Sigmoid colon (tissue), 7 donors: ENCODE measurements at regions of chr7 and their contacts with region 1.

Region 1: GRCh38 chr7:38178004-38178694 is at the start of gene STARD3NL:
- DNase-seq: peak; percentile 99
- H3K4me3 ChIP-seq: peak within 1 kb of the TSS; percentile 62 to 85 (median 82)
- H3K27ac ChIP-seq: peak within 1 kb of the TSS; percentile 85 to 95 (median 94)
- H3K4me1 ChIP-seq: peaks cover 0 to 41% (median 25%) of the 10 kb centered on the region in 4 donors
- H3K27me3 ChIP-seq: no peaks in the 10 kb centered on the region
- CTCF ChIP-seq: peak; percentile 18 to 36 (median 20)
- EP300 ChIP-seq: no peak
- POLR2A ChIP-seq: peak in 1 of 2 donors; percentile 36
- total RNA-seq, gene STARD3NL: 28.2 to 67.6 (median 48.5) TPM

Region 2: DNA sequence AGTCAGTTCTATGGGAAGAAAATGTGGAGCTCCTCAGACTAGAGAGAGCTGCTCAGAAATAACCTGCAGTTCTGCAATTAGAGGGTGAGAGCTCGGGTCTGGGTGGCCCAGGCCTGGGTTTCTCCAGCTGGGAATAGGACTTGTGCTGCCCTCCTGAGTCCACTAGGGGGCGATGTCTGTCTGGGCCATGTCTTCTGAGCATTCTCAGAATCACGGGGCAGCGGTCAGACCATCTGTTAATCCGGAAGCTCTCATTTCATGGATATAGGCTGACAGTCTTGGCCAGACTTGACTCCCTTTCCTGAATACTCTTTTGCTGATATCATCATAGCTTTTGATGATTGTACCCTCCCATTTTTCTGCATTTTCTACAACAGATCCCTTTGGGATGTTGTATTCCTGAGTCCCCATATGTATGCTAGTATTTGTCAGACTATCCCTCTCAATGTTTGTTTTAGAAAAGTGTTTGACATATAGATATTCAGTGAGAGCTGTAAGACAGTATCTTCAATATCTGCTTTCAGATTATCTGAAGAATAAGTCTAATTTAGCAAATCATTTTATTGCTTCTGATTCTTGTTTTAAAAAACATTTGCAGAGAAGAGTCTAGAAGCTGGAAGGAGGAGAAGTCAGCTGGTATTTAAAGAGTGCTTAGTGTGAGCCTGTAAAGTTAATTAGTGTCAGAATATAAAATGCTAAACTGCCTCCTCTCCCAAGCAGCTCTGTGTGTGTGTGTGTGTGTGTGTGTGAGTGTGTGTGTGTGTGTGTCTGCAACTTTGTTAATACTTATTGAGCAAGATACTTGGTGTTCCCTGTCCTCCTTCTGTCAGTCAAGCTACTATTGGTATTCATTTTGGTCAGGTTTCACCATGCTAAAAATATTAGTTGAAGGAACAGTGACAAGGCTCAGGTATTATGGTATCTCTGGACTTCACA is 37.9 kb after region 1 on chr7:
- intact Hi-C with region 1: loop called (anchors 2 kb)
- DNase-seq: peak; percentile 89
- H3K4me3 ChIP-seq: no peak overlapping the region
- H3K27ac ChIP-seq: peak overlapping the region in 1 of 4 donors; percentile 10
- H3K4me1 ChIP-seq: peaks cover 0 to 26% (median 19%) of the 10 kb centered on the region in 4 donors
- H3K27me3 ChIP-seq: no peaks in the 10 kb centered on the region
- CTCF ChIP-seq: peak; percentile 44 to 86 (median 76)
- EP300 ChIP-seq: no peak
- POLR2A ChIP-seq: no peak